Pancreas (tissue), 10 donors: ENCODE measurements at regions of chr1 and their contacts with region 1.

Region 1: DNA sequence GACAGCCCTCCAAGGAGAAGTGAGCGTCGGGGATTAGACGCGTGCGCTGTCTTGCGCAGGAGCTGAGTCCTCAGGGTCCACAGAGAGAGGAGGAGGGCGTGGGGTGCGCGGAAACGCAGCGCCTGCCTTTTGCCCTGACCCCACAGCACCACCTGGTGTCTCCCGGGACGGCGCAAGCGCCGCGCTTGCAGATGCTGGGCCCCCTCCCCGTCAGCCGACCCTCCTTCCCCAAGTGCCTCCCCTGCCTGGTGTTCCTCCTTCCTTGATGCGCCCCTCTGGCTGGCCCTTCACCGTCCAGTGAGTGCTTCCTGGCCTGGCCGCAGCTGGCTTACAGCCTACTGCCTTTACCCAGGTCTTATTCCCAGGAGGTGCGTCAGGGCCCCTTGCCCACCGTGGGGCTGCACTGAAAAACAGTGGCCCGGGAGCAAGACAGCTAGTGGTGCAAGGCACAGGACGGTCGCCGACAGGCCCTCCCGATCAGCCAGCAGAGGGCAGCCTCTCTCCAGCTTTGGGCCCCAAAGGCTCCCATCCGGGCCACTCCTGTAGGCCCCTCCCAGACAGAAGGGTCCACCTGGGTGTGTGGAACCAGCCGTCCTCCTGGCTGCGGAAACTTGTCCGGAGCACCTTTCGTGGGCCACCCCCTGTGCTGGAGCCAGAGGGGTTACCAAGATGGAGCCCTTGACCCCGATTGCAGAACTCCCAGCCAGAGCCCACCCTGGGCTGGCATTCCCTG is 12.9 kb upstream of the PHLDA3 start:
- DNase-seq: peak; percentile 82 to 95 (median 90)
- ATAC-seq: peak; percentile 77 to 91 (median 83)
- H3K4me3 ChIP-seq: peak overlapping the region in 1 of 4 donors; percentile 45
- H3K27ac ChIP-seq: peak overlapping the region in 1 of 4 donors; percentile 77
- H3K4me1 ChIP-seq: peaks cover 3 to 20% (median 10%) of the 10 kb centered on the region in 3 donors
- H3K27me3 ChIP-seq: no peaks in the 10 kb centered on the region
- CTCF ChIP-seq: peak; percentile 87 to 89 (median 88)

Region 2: DNA sequence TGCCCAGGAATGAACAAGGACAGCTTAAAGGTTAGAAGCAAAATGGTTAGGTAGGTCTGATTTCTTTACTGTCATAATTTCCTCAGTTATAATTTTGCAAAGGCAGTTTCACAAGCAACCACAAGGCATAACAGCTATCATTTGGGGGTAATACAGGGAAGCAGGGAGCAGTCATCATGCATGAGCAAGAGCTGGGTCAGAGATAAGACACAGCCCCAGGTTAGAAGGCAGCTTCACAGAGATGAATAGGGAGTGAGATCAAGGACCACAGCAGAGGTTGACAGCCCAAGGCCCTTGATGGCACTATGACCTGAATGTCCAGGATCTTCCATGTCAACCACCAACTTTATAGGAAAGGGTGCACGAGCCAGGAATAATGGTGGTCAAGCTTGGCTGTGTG is 34.0 kb after region 1 on chr1:
- intact Hi-C with region 1: loop called in 2 of 3 experiments (anchors 2 to 5 kb)
- DNase-seq: no peak
- ATAC-seq: no peak
- H3K4me3 ChIP-seq: no peak overlapping the region
- H3K27ac ChIP-seq: no peak overlapping the region
- H3K4me1 ChIP-seq: peaks cover 8 to 16% (median 12%) of the 10 kb centered on the region in 3 donors
- H3K27me3 ChIP-seq: no peaks in the 10 kb centered on the region
- CTCF ChIP-seq: no peak